HEK293 (cell line): ENCODE measurements at regions of chr2 and their contacts with region 1.

Region 1: DNA sequence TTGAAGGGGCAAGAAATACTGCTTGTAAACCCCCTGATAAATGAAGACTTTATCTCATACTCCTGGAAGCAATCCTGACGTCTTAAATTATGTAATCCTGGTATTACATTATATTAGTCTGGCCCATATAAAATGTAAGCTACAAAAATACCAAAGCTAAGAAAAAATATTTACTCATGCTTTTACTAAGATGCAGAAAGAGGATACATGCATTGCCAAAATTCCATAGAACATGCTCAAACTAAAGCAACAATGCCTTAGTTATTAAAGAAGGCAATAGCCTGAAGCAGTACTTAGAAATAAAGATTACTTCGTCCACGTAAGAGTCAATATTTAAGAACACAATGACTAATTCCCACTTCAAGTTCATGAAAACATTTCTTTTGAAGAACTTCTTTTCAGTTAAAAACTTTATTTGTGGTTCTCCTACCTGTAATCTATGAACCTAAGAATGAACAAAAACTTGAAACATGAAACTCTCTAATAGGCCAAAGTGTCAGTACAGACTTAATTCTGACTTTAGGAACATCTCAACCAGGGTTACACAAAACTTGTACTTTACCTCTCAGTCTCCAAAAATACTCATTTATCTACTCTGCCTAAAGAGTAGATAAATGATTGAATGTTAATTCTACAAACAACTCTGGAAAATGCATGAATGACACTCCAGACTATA is 117.3 kb downstream of the THADA start:
- H3K4me3 ChIP-seq: no peak overlapping the region
- H3K27ac ChIP-seq: no peak overlapping the region
- H3K4me1 ChIP-seq: no peaks in the 10 kb centered on the region
- CTCF ChIP-seq: no peak

Region 2: GRCh38 chr2:43438338-43438737 is 40.2 kb before region 1 on chr2:
- CTCF ChIA-PET with region 1: no interaction called
- POLR2A ChIA-PET with region 1: no interaction called
- H3K4me3 ChIP-seq: no peak overlapping the region
- H3K27ac ChIP-seq: no peak overlapping the region
- H3K4me1 ChIP-seq: 0 out of 2 replicates have a peak, but pooled peaks cover 3% of the 10 kb centered on the region
- CTCF ChIP-seq: no peak

Region 3: DNA sequence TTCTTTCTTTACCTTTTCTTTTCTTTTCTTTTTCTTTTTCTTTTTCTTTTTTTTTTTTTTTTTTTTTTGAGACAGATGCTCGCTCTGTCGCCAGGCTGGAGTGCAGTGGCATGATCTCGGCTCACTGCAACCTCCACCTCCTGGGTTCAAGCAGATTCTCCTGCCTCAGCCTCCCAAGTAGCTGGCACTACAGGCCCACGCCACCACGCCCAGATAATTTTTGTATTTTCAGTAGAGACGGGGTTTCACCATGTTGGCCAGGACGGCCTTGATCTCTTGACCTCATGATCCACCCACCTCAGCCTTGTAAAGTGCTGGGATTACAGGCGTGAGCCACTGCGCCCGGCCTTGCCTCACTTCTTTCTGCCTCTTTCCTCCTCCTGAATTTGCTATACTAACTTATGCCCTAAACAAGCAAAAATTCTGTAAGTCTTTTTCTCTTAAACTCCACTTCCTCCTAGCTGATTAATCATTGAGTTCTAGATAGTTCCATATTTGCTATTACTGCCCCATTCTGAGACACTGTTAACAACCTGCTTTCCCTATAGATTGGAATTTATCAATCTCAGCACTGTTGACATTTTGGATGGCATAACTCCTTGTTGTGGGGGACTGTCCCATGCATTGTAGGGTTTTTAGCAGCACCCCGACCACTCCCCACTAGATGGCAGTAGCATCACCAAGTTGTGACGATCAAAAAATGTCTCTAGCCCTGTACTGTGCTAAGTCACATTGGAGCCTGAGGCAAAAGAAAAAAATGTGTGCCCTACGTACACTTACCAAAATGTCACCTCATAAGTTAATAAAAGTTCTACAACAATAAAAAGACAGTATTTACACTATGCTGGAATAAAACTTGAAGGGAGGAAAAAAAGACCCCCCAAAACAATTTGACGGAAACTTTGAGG is 133.7 kb after region 1 on chr2:
- CTCF ChIA-PET with region 1: no interaction called
- POLR2A ChIA-PET with region 1: no interaction called
- H3K4me3 ChIP-seq: no peak overlapping the region
- H3K27ac ChIP-seq: no peak overlapping the region
- H3K4me1 ChIP-seq: no peaks in the 10 kb centered on the region
- CTCF ChIP-seq: peak; percentile 73

Region 4: GRCh38 chr2:43877782-43878464 is 399.4 kb after region 1 on chr2:
- CTCF ChIA-PET with region 1: interaction called, 10 read pairs
- POLR2A ChIA-PET with region 1: no interaction called
- H3K4me3 ChIP-seq: no peak overlapping the region
- H3K27ac ChIP-seq: no peak overlapping the region
- H3K4me1 ChIP-seq: no peaks in the 10 kb centered on the region
- CTCF ChIP-seq: peak; percentile 84